Caco-2 (cell line): ENCODE measurements at regions of chr10 and their contacts with region 1.

Region 1: DNA sequence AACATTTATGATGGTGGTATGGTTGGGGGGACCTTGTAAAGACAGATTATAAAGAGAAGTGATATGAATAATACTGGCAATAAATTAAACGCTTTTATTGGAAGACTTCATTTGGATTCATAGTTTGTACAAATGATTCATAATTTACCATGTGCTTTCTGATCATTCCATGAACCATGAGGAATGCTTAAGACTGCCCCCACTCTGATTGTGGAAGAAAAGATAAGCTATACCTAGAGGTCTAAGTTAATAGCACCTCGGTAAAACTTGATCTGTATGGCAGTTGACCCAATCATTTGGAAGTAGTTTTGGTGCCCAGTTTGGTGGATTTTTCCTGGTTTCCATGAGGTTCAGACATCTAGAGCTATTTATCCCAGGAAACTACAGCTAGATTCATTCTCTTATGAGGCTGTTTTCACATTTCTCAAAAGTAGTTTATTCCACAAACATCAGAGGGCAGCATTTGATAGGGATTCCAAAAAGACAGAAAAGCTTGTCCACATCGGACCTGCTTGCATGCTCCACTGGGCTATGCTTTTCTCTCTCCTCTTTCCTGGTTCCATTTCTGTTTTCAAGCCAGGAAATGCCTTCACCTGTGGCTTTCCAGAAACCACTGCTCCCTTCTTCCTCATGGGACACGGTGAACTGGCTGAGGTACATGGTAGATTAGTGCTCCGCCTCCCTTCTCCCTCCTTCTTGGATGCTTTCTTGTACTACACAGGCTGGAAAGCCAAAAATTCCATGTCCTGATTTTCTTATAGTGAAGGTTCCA is 29.2 kb downstream of the TFAM start:
- DNase-seq: peak; percentile 59 to 85
- H3K4me3 ChIP-seq: no peak overlapping the region
- H3K4me3 Mint-ChIP-seq: no peak overlapping the region
- H3K27ac Mint-ChIP-seq: peak overlapping the region; percentile 38
- H3K4me1 ChIP-seq: peaks cover 35% of the 10 kb centered on the region
- H3K4me1 Mint-ChIP-seq: peaks cover 37% of the 10 kb centered on the region
- H3K27me3 ChIP-seq: no peaks in the 10 kb centered on the region
- H3K27me3 Mint-ChIP-seq: no peaks in the 10 kb centered on the region
- CTCF ChIP-seq: peak; percentile 57 to 84

Region 2: GRCh38 chr10:58201704-58202103 is 212.8 kb before region 1 on chr10:
- CTCF ChIA-PET with region 1: no interaction called
- POLR2A ChIA-PET with region 1: no interaction called
- intact Hi-C with region 1: no loop called
- DNase-seq: no peak
- H3K4me3 ChIP-seq: no peak overlapping the region
- H3K4me3 Mint-ChIP-seq: no peak overlapping the region
- H3K27ac Mint-ChIP-seq: no peak overlapping the region
- H3K4me1 ChIP-seq: no peaks in the 10 kb centered on the region
- H3K4me1 Mint-ChIP-seq: peaks cover 7% of the 10 kb centered on the region
- H3K27me3 ChIP-seq: no peaks in the 10 kb centered on the region
- H3K27me3 Mint-ChIP-seq: no peaks in the 10 kb centered on the region
- CTCF ChIP-seq: no peak

Region 3: DNA sequence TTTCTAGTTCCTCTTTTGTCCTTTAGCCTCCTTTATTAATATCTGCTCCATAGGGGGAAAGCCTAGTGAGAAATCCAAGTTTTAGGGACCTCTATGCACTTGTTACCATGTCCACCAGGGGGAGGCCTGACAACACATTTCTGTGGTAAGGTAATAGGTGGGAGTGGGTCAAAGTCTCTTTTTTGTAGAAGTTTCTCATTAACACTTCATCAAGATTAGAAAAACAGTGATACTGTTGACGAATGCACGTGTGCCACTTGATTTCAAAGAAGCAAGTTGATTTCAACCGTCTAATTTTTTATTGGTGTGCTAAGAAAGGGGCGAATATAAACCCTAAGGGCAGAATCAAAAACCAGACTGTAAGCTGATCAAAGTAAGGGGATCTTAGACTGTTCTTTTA is 114.9 kb before region 1 on chr10:
- CTCF ChIA-PET with region 1: no interaction called
- POLR2A ChIA-PET with region 1: interaction called, 3 read pairs
- intact Hi-C with region 1: loop called (anchors 1 kb)
- DNase-seq: peak; percentile 83 to 90
- H3K4me3 ChIP-seq: peak overlapping the region; percentile 3; the same call in 1 of the 2 replicates
- H3K4me3 Mint-ChIP-seq: peak overlapping the region; percentile 37
- H3K27ac Mint-ChIP-seq: no peak overlapping the region
- H3K4me1 ChIP-seq: peaks cover 10% of the 10 kb centered on the region
- H3K4me1 Mint-ChIP-seq: peaks cover 9% of the 10 kb centered on the region
- H3K27me3 ChIP-seq: no peaks in the 10 kb centered on the region
- H3K27me3 Mint-ChIP-seq: no peaks in the 10 kb centered on the region
- CTCF ChIP-seq: peak; percentile 97 to 99

Region 4: DNA sequence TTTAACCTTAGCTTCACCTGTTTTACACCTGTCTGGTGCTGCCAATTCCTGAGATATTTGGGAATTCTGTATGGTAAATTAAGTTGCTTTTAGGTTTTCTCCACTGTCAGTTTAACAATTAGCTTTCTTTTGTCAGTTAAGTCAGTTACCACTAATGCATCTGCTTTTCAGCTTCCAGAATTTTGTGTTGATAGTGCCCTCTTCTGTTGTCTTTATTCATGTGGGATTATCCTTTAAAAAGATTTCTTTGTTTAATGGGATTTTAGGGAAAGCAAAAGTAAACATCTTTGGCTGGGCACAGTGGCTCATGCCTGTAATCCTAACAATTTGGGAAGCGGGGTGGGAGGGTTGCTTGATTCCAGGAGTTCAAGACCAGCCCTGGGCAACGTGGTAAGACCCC is 21.1 kb before region 1 on chr10:
- CTCF ChIA-PET with region 1: no interaction called
- POLR2A ChIA-PET with region 1: no interaction called
- intact Hi-C with region 1: no loop called
- DNase-seq: no peak
- H3K4me3 ChIP-seq: no peak overlapping the region
- H3K4me3 Mint-ChIP-seq: no peak overlapping the region
- H3K27ac Mint-ChIP-seq: no peak overlapping the region
- H3K4me1 ChIP-seq: no peaks in the 10 kb centered on the region
- H3K4me1 Mint-ChIP-seq: peaks cover 9% of the 10 kb centered on the region
- H3K27me3 ChIP-seq: no peaks in the 10 kb centered on the region
- H3K27me3 Mint-ChIP-seq: no peaks in the 10 kb centered on the region
- CTCF ChIP-seq: no peak

Region 5: DNA sequence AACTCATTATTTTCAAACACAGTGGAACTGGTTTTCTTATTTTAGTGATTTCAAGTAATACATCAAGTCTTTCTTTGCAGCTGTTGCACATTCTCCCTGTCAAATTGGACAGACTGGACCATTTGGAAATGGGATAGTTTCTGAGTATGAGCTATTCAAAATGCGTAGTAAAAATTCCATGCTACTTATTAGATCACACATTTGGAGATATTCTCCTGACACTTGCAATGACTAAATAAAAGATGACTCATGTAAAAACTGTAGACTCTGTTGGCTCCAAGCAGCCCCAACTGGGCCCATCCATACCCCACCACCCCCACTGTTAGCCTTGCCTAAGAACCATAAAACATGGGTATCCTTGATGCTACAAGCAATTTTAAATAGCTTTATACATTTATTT is 72.4 kb after region 1 on chr10:
- CTCF ChIA-PET with region 1: interaction called, 11 read pairs
- POLR2A ChIA-PET with region 1: no interaction called
- intact Hi-C with region 1: loop called (anchors 1 kb)
- DNase-seq: no peak
- H3K4me3 ChIP-seq: no peak overlapping the region
- H3K4me3 Mint-ChIP-seq: no peak overlapping the region
- H3K27ac Mint-ChIP-seq: no peak overlapping the region
- H3K4me1 ChIP-seq: no peaks in the 10 kb centered on the region
- H3K4me1 Mint-ChIP-seq: peaks cover 5% of the 10 kb centered on the region
- H3K27me3 ChIP-seq: no peaks in the 10 kb centered on the region
- H3K27me3 Mint-ChIP-seq: no peaks in the 10 kb centered on the region
- CTCF ChIP-seq: no peak

Region 6: GRCh38 chr10:58518775-58519174 is 104.3 kb after region 1 on chr10:
- CTCF ChIA-PET with region 1: interaction called, 19 read pairs
- POLR2A ChIA-PET with region 1: no interaction called
- intact Hi-C with region 1: no loop called
- DNase-seq: peak; percentile 25 to 47
- H3K4me3 ChIP-seq: no peak overlapping the region
- H3K4me3 Mint-ChIP-seq: peak overlapping the region; percentile 47
- H3K27ac Mint-ChIP-seq: peak overlapping the region; percentile 29
- H3K4me1 ChIP-seq: peaks cover 48% of the 10 kb centered on the region
- H3K4me1 Mint-ChIP-seq: peaks cover 36% of the 10 kb centered on the region
- H3K27me3 ChIP-seq: no peaks in the 10 kb centered on the region
- H3K27me3 Mint-ChIP-seq: no peaks in the 10 kb centered on the region
- CTCF ChIP-seq: no peak

Region 7: DNA sequence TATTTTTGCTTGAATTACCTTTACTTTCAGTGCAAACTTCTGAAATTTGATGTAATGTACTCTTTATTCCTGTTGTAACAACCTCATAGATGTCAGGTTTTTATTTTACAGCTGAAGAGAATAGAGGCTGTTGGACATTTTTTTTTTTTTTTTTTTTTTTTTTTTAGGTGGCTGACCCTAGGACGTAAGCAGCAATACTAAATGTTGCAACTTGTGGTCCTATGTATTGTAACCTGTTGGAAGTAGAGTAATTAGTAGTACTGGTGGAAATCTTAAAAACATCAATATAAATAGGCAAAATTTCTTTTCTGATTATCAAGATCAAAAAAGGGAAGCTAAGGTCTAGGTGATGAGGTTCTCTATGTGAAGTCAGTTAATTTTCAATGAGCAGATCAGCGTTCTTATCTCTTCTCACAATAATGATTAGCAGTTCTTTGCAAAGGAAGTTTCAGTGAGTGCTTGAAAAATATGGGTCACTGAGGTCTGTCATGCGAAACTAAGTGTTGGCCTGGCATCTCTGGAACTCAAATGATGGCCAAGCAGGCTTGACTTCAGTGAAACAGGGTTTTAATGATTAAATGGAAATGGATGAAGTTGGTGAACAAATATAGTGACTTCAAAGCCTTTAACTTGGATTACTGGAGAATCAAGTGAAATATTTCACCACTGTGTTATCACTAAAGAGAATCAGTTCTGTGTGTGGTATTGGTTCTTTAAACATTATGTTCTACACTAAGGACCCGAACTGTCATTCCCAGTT is 140.9 kb after region 1 on chr10:
- CTCF ChIA-PET with region 1: no interaction called
- POLR2A ChIA-PET with region 1: interaction called, 11 read pairs
- intact Hi-C with region 1: loop called (anchors 1 kb)
- DNase-seq: peak; percentile 87 to 90
- H3K4me3 ChIP-seq: no peak overlapping the region
- H3K4me3 Mint-ChIP-seq: peak overlapping the region; percentile 54
- H3K27ac Mint-ChIP-seq: peak overlapping the region; percentile 27
- H3K4me1 ChIP-seq: peaks cover 74% of the 10 kb centered on the region
- H3K4me1 Mint-ChIP-seq: peaks cover 79% of the 10 kb centered on the region
- H3K27me3 ChIP-seq: no peaks in the 10 kb centered on the region
- H3K27me3 Mint-ChIP-seq: no peaks in the 10 kb centered on the region
- CTCF ChIP-seq: no peak

Region 8: GRCh38 chr10:58590152-58590840 is 175.8 kb after region 1 on chr10:
- CTCF ChIA-PET with region 1: no interaction called
- POLR2A ChIA-PET with region 1: no interaction called
- intact Hi-C with region 1: no loop called
- DNase-seq: no peak
- H3K4me3 ChIP-seq: no peak overlapping the region
- H3K4me3 Mint-ChIP-seq: no peak overlapping the region
- H3K27ac Mint-ChIP-seq: no peak overlapping the region
- H3K4me1 ChIP-seq: peaks cover 4% of the 10 kb centered on the region; the same call in 1 of the 2 replicates
- H3K4me1 Mint-ChIP-seq: peaks cover 16% of the 10 kb centered on the region
- H3K27me3 ChIP-seq: no peaks in the 10 kb centered on the region
- H3K27me3 Mint-ChIP-seq: no peaks in the 10 kb centered on the region
- CTCF ChIP-seq: no peak

Region 9: DNA sequence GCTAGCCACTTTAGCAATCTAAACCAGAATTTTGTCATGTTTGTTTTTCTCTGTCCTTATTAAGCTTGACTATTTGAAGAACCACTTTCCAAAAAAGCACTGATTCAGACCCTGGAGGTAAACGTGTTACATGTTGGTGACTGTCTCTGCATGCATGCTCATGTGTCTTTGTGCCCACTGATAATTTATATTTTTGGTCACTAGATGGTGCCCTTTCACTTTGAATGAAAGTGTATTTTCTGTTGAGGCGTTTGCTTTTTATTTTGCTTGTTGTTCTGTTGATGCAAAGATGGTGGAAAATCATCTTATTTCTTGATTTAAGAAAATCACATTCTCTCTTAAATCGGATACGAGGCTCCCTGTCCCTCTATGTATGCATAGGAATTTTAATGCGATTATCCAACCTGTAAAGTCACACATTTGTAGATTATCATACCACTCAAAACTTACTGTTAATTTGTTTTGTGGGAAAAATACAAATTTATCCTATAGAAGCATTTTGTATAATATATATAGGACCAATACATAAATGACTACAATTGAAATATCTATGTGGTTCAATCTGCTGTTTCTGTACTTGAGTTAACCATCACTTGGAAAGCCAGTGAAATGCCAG is 367.5 kb after region 1 on chr10:
- CTCF ChIA-PET with region 1: interaction called, 6 read pairs
- POLR2A ChIA-PET with region 1: no interaction called
- intact Hi-C with region 1: loop called (anchors 1 kb)
- DNase-seq: peak in 1 of 2 experiments; percentile 78
- H3K4me3 ChIP-seq: no peak overlapping the region
- H3K4me3 Mint-ChIP-seq: no peak overlapping the region
- H3K27ac Mint-ChIP-seq: peak overlapping the region; percentile 60
- H3K4me1 ChIP-seq: peaks cover 31% of the 10 kb centered on the region
- H3K4me1 Mint-ChIP-seq: peaks cover 38% of the 10 kb centered on the region
- H3K27me3 ChIP-seq: no peaks in the 10 kb centered on the region
- H3K27me3 Mint-ChIP-seq: no peaks in the 10 kb centered on the region
- CTCF ChIP-seq: peak; percentile 71 to 83